ENCODE measurements at regions of chr7 and their contacts with region 1.

Region 1: GRCh38 chr7:130793855-130794618 is 60.0 kb upstream of the KLF14 start:
- H3K4me3 ChIP-seq: no peak overlapping the region
- H3K27ac ChIP-seq: no peak overlapping the region
- H3K4me1 ChIP-seq: no peaks in the 10 kb centered on the region
- CTCF ChIP-seq: no peak

Region 2: DNA sequence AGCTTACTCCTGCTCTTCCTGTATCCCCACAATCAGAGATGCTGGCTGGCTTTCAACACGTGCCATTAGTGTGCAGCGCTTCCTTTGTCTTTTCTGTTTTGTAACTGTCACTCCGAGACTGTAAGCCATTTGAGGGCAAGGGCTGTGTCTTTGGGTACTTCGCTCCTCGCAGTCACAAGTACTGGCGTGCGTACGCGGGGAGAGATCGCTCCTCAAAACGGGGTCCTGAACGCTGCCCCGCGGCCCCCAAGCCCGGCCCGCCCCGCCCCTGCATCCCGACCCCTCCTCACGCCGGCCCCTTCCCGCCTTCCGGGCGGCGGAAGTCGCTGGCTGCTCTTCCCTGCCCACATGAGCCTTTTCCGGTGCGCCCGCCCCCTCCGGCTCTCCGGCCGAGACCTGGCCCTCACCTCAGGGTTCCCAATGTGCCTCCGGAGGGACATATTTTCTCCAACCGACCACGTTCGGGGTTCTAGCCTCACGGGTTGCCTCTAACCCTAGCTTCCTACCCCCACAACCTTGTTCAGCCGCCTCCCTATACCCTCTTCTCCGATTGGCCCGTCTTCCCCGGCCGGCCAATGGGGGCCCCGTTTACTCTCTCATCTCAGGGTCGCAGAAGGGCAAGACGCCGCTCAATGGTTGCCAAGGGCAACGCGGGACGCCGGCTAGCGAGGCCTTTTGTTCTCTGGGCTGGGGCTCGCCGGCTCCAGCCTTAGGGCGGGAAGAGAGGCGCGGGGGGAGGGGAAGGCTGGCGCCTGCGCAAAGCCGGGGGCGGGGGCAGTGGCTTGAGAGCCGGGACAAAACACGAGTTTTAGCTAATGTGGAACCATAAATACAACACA is 353.3 kb before region 1 on chr7 and contains the start of gene CEP41:
- CTCF ChIA-PET with region 1: no interaction called
- POLR2A ChIA-PET with region 1: interaction called, 10 read pairs
- H3K4me3 ChIP-seq: peak within 1 kb of the TSS; percentile 80
- H3K27ac ChIP-seq: peak within 1 kb of the TSS; percentile 80
- H3K4me1 ChIP-seq: no peaks in the 10 kb centered on the region
- CTCF ChIP-seq: no peak

Region 3: DNA sequence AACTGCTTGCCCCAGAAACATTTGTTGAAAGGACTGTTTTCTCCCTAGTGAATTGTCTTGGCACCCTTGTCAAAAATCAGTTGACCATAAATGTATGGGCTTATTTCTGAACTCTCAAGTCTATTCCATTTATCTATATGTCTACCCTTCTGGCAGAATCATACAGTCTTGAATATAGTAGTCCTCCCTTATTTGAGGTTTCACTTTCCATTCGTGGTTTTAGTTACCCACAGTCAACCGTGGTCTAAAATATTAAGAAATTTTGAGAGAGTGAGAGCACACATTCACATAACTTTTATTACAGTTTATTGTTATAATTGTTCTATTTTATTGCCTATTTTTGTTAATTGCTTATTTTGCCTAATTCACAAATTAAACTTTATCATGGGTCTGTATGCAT is 335.8 kb before region 1 on chr7:
- CTCF ChIA-PET with region 1: no interaction called
- POLR2A ChIA-PET with region 1: no interaction called
- H3K4me3 ChIP-seq: no peak overlapping the region
- H3K27ac ChIP-seq: no peak overlapping the region
- H3K4me1 ChIP-seq: no peaks in the 10 kb centered on the region
- CTCF ChIP-seq: no peak